MCF 10A (cell line): ENCODE measurements at regions of chr10 and their contacts with region 1.

Region 1: DNA sequence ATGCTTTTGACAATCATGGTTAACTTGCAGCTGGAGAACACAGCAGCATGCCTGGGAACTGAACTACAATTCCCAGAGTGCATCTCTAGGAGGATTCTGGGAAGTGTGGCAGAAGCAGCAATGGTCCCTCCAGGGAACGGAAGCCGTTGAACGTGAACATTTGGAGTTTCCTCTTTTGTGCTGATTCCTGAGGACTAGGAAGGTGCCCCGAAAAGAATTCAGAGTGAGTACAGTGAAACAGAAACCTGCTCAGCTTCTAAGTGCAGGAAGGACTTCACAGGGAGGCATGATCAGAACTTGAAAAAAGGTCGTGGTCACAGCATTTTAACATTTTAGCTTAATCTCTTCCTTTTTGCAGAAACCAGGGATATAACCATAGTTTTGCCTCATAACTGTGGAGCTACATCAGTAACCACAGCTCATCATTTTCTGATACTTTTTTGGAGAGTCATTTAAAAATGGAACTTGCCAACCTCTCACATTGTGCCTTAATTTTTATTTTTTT is at the start of gene NUDT13:
- DNase-seq: peak; percentile 67
- H3K4me3 Mint-ChIP-seq: peak within 1 kb of the TSS; percentile 78
- H3K27ac Mint-ChIP-seq: peak within 1 kb of the TSS; percentile 93
- H3K4me1 Mint-ChIP-seq: peaks cover 6% of the 10 kb centered on the region
- H3K27me3 Mint-ChIP-seq: no peaks in the 10 kb centered on the region
- CTCF ChIP-seq: no peak
- total RNA-seq, gene NUDT13: 1.7 and 1.8 TPM in 2 replicates

Region 2: DNA sequence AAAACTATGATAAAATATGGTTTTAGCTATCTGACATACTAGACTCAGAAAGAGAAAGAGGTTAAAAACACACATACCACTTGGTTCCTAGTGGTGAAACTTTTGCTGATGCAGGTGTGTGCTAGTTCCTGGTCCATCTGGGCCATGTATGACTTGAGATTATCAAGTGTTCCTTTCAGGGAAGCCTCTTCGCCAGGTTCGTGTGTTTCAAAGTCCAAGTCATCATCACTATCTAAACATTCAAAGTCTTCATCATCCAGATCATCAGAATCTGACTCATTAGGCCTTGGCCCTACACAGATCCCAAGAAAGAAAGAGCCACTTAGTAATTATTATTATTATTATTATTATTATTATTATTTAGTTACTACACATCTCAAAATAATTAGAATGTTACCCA is 26.2 kb after region 1 on chr10:
- CTCF ChIA-PET with region 1: interaction called, 3 read pairs
- POLR2A ChIA-PET with region 1: interaction called, 10 read pairs
- intact Hi-C with region 1: no loop called
- DNase-seq: no peak
- H3K4me3 Mint-ChIP-seq: no peak overlapping the region
- H3K27ac Mint-ChIP-seq: no peak overlapping the region
- H3K4me1 Mint-ChIP-seq: peaks cover 6% of the 10 kb centered on the region
- H3K27me3 Mint-ChIP-seq: no peaks in the 10 kb centered on the region
- CTCF ChIP-seq: no peak

Region 3: DNA sequence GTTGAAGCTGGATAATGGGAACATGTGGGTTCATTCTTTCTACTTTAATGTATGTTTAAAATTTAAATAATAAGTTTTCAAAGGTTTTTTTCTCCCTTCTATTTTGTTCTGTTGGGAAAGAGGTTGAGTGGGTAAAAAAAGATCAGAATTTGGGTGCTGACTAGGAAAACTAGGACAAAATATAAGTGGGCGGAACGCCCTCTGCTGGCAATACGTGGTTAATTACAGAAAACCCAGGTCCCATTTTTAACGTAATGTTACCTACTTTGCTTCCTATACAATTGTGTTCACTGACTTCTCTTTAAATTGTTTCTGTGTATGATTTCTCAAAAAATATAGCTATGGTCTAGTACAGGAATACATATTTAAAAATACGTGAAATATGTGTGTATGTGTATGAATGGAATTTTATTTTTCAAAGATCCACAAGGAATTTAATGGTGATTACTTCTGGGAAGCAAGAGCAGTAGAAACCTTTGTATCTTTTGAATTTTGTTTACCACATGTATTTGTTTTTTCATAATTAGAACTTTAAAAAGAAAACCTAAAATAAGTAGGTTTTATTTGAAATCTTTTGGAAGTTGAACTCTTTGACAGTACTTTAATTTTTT is 48.7 kb after region 1 on chr10:
- CTCF ChIA-PET with region 1: interaction called, 4 read pairs
- POLR2A ChIA-PET with region 1: interaction called, 17 read pairs
- intact Hi-C with region 1: no loop called
- DNase-seq: peak; percentile 69
- H3K4me3 Mint-ChIP-seq: no peak overlapping the region
- H3K27ac Mint-ChIP-seq: no peak overlapping the region
- H3K4me1 Mint-ChIP-seq: peaks cover 24% of the 10 kb centered on the region
- H3K27me3 Mint-ChIP-seq: no peaks in the 10 kb centered on the region
- CTCF ChIP-seq: peak; percentile 71

Region 4: GRCh38 chr10:73167783-73168464 is 57.5 kb after region 1 on chr10 and contains the starts of genes ECD and FAM149B1:
- CTCF ChIA-PET with region 1: interaction called, 3 read pairs
- POLR2A ChIA-PET with region 1: interaction called, 12 read pairs
- intact Hi-C with region 1: no loop called
- DNase-seq: peak; percentile 93
- H3K4me3 Mint-ChIP-seq: peak within 1 kb of the TSS; percentile 92
- H3K27ac Mint-ChIP-seq: peak within 1 kb of the TSS; percentile 99
- H3K4me1 Mint-ChIP-seq: peaks cover 20% of the 10 kb centered on the region
- H3K27me3 Mint-ChIP-seq: no peaks in the 10 kb centered on the region
- CTCF ChIP-seq: no peak
- total RNA-seq, gene ECD: 29.9 and 31.5 TPM in 2 replicates
- total RNA-seq, gene FAM149B1: 22.8 and 27.7 TPM in 2 replicates